ENCODE measurements at regions of chr1 and their contacts with region 1.

Region 1: GRCh38 chr1:153365303-153366095 is 7.8 kb downstream of the S100A9 start:
- DNase-seq: no peak
- CTCF ChIP-seq: no peak

Region 2: GRCh38 chr1:153488731-153489130 is 123.2 kb after region 1 on chr1:
- in situ Hi-C with region 1: loop called (anchors 10 kb)
- DNase-seq: no peak
- CTCF ChIP-seq: no peak

Region 3: GRCh38 chr1:153832293-153832692 is 466.8 kb after region 1 on chr1:
- in situ Hi-C with region 1: no loop called
- DNase-seq: no peak
- CTCF ChIP-seq: no peak

Measured in GM13977 (cell line).